PC-9 (cell line): ENCODE measurements at regions of chr3 and their contacts with region 1.

Region 1: GRCh38 chr3:94069194-94069813 is 6.4 kb downstream of the NSUN3 start:
- DNase-seq: peak in 1 of 2 experiments; percentile 38
- H3K4me3 ChIP-seq: no peak overlapping the region
- H3K27ac ChIP-seq: no peak overlapping the region
- H3K4me1 ChIP-seq: peaks cover 3% of the 10 kb centered on the region
- H3K27me3 ChIP-seq: no peaks in the 10 kb centered on the region
- CTCF ChIP-seq: peak; percentile 91

Region 2: DNA sequence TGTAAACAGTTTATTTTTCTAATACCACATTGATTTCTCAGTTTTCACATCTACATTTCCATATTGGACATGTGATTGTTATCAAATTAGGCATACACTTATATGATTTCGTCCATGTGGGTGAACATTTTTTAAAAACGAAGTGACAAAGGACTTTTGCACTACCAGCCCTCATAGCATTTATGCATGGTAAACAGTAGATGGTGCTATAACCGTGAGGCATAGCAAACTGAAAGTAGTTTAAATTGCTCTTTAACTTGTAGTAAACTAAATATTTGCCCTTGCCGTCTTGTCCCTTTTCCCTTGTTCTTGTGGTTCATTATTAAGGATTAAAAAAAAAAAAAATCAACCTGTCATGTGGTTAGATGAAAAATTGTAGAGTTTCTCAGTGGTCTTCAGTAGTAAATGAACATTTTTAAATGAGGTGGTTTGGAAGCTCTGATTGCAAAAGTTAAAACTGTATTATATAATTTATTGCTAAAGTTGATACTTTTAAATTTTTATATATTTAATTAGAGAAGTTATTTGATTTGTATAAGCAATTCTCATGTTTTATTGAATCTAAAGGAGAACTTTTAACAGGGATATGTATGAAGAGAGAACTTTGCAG is 64.9 kb before region 1 on chr3:
- CTCF ChIA-PET with region 1: interaction called, 4 read pairs
- POLR2A ChIA-PET with region 1: no interaction called
- intact Hi-C with region 1: loop called (anchors 1 kb)
- DNase-seq: peak in 1 of 2 experiments; percentile 74
- H3K4me3 ChIP-seq: peak overlapping the region; percentile 30; the same call in 1 of the 2 replicates
- H3K27ac ChIP-seq: no peak overlapping the region
- H3K4me1 ChIP-seq: peaks cover 8% of the 10 kb centered on the region; the same call in 1 of the 2 replicates
- H3K27me3 ChIP-seq: no peaks in the 10 kb centered on the region
- CTCF ChIP-seq: peak; percentile 96